ENCODE measurements at regions of chr18 and their contacts with region 1.

Region 1: GRCh38 chr18:22977847-22978701 is 44.9 kb downstream of the RBBP8 start:
- DNase-seq: peak; percentile 86
- H3K4me3 Mint-ChIP-seq: peak overlapping the region; percentile 68
- H3K27ac Mint-ChIP-seq: peak overlapping the region; percentile 98
- H3K4me1 Mint-ChIP-seq: peaks cover 24% of the 10 kb centered on the region
- H3K27me3 Mint-ChIP-seq: no peaks in the 10 kb centered on the region
- CTCF ChIP-seq: no peak

Region 2: GRCh38 chr18:22422909-22423548 is 555.0 kb before region 1 on chr18:
- CTCF ChIA-PET with region 1: no interaction called
- POLR2A ChIA-PET with region 1: no interaction called
- intact Hi-C with region 1: no loop called
- DNase-seq: no peak
- H3K4me3 Mint-ChIP-seq: no peak overlapping the region
- H3K27ac Mint-ChIP-seq: no peak overlapping the region
- H3K4me1 Mint-ChIP-seq: peaks cover 2% of the 10 kb centered on the region
- H3K27me3 Mint-ChIP-seq: no peaks in the 10 kb centered on the region
- CTCF ChIP-seq: no peak

Region 3: GRCh38 chr18:22624151-22624550 is 353.9 kb before region 1 on chr18:
- CTCF ChIA-PET with region 1: no interaction called
- POLR2A ChIA-PET with region 1: no interaction called
- intact Hi-C with region 1: no loop called
- DNase-seq: no peak
- H3K4me3 Mint-ChIP-seq: no peak overlapping the region
- H3K27ac Mint-ChIP-seq: no peak overlapping the region
- H3K4me1 Mint-ChIP-seq: no peaks in the 10 kb centered on the region
- H3K27me3 Mint-ChIP-seq: no peaks in the 10 kb centered on the region
- CTCF ChIP-seq: no peak

Region 4: DNA sequence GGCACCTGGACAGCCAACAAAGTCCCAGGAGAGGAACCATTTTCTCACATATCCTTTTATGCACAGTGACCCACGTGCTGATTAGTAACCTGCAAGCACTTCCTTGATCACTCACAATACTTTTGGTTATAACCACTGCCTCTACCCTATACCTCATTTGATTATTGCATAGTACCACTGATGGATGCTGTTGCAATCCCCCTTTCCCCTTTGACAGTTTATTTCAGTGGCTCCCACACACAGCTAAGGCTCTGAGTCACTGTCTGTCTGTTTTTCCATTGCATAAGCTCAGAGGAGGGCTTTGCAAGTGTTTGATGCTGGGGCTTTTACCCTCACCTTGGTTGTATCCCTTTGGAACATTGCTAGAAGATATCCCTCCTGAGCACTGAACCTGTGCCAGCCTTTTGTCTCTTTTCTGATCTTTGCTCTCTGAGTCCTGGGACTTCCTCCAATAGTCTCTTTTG is 146.6 kb before region 1 on chr18:
- CTCF ChIA-PET with region 1: interaction called, 3 read pairs
- POLR2A ChIA-PET with region 1: interaction called, 20 read pairs
- intact Hi-C with region 1: loop called (anchors 5 kb)
- DNase-seq: peak; percentile 97
- H3K4me3 Mint-ChIP-seq: no peak overlapping the region
- H3K27ac Mint-ChIP-seq: no peak overlapping the region
- H3K4me1 Mint-ChIP-seq: peaks cover 30% of the 10 kb centered on the region
- H3K27me3 Mint-ChIP-seq: no peaks in the 10 kb centered on the region
- CTCF ChIP-seq: no peak

Region 5: GRCh38 chr18:22952525-22952924 is 25.5 kb before region 1 on chr18:
- CTCF ChIA-PET with region 1: no interaction called
- POLR2A ChIA-PET with region 1: interaction called, 11 read pairs
- intact Hi-C with region 1: no loop called
- DNase-seq: no peak
- H3K4me3 Mint-ChIP-seq: no peak overlapping the region
- H3K27ac Mint-ChIP-seq: no peak overlapping the region
- H3K4me1 Mint-ChIP-seq: no peaks in the 10 kb centered on the region
- H3K27me3 Mint-ChIP-seq: no peaks in the 10 kb centered on the region
- CTCF ChIP-seq: no peak

Region 6: GRCh38 chr18:23317975-23318675 is 340.1 kb after region 1 on chr18:
- CTCF ChIA-PET with region 1: no interaction called
- POLR2A ChIA-PET with region 1: no interaction called
- intact Hi-C with region 1: no loop called
- DNase-seq: peak; percentile 44
- H3K4me3 Mint-ChIP-seq: no peak overlapping the region
- H3K27ac Mint-ChIP-seq: no peak overlapping the region
- H3K4me1 Mint-ChIP-seq: peaks cover 20% of the 10 kb centered on the region
- H3K27me3 Mint-ChIP-seq: no peaks in the 10 kb centered on the region
- CTCF ChIP-seq: no peak